PC-9 (cell line): ENCODE measurements at regions of chr20 and their contacts with region 1.

Region 1: DNA sequence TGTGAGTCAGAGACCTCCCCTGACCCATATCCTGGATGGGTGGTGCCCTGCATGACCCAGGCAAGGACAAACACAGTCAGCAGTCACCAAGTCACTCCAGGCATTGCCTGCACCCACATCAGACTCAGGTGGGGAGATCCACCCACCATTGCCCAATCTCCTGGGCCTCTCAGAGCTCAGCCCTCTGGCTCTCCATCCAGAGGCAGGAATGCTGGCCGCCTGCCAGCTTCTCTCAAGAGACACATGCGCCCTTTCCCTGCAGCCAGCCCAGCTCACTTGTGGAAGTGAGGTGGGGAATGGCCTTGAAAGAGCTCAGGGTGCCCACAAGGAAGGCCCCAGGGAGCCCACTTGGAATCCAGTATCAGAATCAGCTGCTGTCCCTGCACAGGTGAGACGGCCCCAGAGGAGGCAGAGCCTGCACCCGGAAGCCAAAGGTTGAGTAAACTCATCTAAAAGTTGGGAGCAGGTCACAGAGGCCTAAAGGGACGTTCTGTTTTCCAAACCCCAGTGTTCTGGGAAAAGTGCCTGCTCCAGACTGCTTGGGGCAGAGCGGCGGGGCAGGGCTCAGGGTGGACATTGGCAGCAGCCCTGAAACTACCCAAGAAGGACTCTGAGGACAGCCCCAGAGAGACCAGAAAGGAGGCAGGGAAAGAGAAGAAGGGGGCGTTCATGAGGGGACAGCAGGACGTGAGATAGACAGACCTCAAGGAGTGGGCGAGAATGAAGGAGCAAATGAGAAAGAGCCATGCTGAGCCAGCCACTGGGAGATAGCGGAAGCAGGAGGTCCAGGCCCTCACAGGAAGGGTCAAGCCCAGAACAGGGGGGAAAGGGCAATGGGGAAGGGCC is 129.7 kb downstream of the PREX1 start:
- DNase-seq: peak; percentile 95 to 96
- H3K4me3 ChIP-seq: no peak overlapping the region
- H3K27ac ChIP-seq: peak overlapping the region; percentile 59
- H3K4me1 ChIP-seq: peaks cover 24% of the 10 kb centered on the region
- H3K27me3 ChIP-seq: no peaks in the 10 kb centered on the region
- CTCF ChIP-seq: no peak

Region 2: GRCh38 chr20:50558483-50558947 is 1860.4 kb after region 1 on chr20:
- CTCF ChIA-PET with region 1: no interaction called
- POLR2A ChIA-PET with region 1: no interaction called
- intact Hi-C with region 1: loop called (anchors 10 kb)
- DNase-seq: peak; percentile 55 to 64
- H3K4me3 ChIP-seq: no peak overlapping the region
- H3K27ac ChIP-seq: peak overlapping the region; percentile 55
- H3K4me1 ChIP-seq: peaks cover 32% of the 10 kb centered on the region
- H3K27me3 ChIP-seq: no peaks in the 10 kb centered on the region
- CTCF ChIP-seq: no peak